ENCODE measurements at regions of chrX and their contacts with region 1.

Region 1: GRCh38 chrX:9280831-9281230 is 184.0 kb upstream of the TBL1X start:
- DNase-seq: no peak
- ATAC-seq: no peak
- H3K4me3 Mint-ChIP-seq: no peak overlapping the region
- H3K27ac Mint-ChIP-seq: no peak overlapping the region
- H3K4me1 Mint-ChIP-seq: peaks cover 10% of the 10 kb centered on the region
- H3K27me3 Mint-ChIP-seq: no peaks in the 10 kb centered on the region
- CTCF ChIP-seq: no peak

Region 2: DNA sequence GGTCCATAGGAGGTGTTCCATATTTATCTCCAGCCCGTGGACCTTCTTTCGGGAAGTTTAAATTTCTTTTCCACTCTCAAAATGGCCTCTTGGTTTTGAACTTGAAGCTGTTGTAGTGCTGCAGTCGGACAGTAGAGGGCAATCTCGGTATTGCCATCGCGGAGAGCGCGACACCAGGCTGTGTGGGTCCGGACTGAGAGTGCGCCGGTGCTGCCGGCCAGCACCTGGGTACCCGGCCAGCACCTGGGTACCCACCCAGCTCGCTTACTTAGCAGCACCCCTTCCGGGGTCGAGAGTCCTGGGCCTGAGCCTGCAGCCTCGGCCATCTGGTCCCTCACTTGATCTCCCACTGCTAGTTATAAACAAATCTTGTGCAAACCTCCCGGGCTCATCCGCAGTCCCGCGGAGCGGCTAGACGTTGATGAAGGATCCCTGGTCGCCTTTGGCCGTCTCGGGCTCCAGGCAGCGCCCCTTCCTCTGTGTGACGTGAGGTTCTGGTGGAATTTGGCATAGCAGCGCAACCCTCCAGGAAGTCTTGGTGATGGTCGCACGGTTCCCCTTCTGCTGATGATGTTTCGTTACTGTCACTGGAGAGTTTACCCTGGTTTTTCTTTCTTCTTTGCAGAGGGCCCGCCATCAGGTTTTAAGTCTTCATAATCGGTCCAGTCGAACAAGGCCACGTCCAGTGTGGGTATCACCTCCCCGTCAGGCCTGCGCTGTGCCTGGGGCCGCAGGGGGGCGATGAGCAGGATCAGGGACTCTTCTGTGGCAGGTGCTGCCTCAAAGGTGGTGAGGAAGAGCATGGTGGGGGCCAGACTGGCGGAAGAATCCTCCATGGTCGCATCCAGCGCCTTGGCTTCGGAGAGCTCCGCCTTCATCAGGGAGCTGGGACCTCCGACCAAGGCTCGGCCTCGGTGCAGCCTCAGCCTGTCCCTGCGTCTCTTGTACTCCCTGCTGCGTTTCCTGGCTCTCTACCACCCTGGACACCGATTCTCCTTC is 497.4 kb before region 1 on chrX:
- CTCF ChIA-PET with region 1: no interaction called
- POLR2A ChIA-PET with region 1: no interaction called
- intact Hi-C with region 1: no loop called
- DNase-seq: no peak
- ATAC-seq: peak; percentile 65
- H3K4me3 Mint-ChIP-seq: no peak overlapping the region
- H3K27ac Mint-ChIP-seq: no peak overlapping the region
- H3K4me1 Mint-ChIP-seq: no peaks in the 10 kb centered on the region
- H3K27me3 Mint-ChIP-seq: no peaks in the 10 kb centered on the region
- CTCF ChIP-seq: no peak

Region 3: DNA sequence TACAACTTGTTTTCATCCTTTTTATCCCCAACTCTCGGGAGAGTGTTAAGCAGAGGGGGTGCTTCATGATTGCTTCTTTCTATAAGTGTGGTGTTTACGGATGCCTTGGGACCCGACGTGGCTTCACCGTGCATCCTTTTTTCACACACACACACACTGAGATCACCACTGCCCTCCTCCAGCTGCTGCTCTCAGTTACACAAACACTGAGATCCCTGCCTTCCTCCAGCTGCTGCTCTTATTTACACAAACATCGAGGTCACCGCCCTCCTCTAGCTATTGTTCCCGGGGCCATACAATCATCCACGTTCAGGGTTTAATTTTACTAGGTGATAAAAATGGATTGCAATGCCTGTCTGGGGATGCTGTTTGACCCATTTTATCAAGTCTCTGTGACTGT is 91.5 kb before region 1 on chrX:
- CTCF ChIA-PET with region 1: no interaction called
- POLR2A ChIA-PET with region 1: interaction called, 15 read pairs
- intact Hi-C with region 1: no loop called
- DNase-seq: no peak
- ATAC-seq: no peak
- H3K4me3 Mint-ChIP-seq: no peak overlapping the region
- H3K27ac Mint-ChIP-seq: no peak overlapping the region
- H3K4me1 Mint-ChIP-seq: no peaks in the 10 kb centered on the region
- H3K27me3 Mint-ChIP-seq: peaks cover 4% of the 10 kb centered on the region
- CTCF ChIP-seq: no peak